ENCODE measurements at regions of chr15 and their contacts with region 1.

Region 1: DNA sequence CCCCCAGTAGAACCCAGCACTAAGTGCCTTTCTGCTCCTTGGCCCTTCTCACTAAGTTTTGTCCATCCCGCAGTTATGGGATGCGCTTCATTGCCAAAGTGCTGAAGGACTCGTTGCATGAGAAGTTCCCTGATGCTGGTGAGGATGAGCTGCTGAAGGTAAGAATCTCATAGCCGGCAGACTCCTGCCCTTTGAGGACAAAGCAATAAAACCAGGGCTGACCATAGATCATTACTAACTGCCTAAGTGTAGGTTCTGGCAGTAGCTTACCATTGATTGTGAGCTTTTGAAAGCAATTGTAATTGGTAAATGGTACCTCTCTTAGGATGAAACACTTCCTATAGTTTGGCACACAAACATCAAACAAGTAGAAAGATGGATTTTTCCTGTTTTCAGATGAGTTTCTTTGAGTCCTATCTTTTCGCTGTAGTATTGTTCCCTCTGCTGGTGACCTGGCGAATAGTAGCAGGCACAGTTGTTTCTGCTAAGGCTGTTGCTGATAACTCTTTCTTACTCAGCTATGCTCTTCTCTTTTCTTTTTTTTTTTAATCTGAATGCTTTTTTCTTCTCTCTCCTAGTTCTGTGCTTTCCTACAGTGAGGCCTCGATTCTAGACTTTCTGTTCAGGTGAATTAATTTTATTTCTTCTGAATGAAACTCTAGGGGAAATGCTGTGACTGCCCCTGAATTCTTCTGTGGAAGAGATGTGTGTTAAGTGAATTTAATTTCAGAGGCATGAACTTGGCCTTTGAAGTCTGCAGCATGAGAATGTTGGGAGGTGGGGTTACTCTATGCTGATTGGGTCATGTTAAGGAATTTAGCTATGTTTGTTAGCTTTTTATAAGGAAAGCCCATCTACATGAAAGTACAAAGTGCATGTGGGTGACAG is 47.4 kb upstream of the CRTC3 start:
- DNase-seq: peak; percentile 71
- ATAC-seq: no peak
- H3K4me3 ChIP-seq: no peak overlapping the region
- H3K27ac ChIP-seq: no peak overlapping the region
- H3K4me1 ChIP-seq: peaks cover 33% of the 10 kb centered on the region
- H3K27me3 ChIP-seq: no peaks in the 10 kb centered on the region
- CTCF ChIP-seq: peak; percentile 91

Region 2: GRCh38 chr15:90320061-90320884 is 162.1 kb before region 1 on chr15:
- CTCF ChIA-PET with region 1: interaction called, 10 read pairs
- POLR2A ChIA-PET with region 1: no interaction called
- intact Hi-C with region 1: loop called (anchors 1 kb)
- DNase-seq: peak; percentile 96
- ATAC-seq: peak; percentile 93
- H3K4me3 ChIP-seq: peak overlapping the region; percentile 28; the same call in 1 of the 2 replicates
- H3K27ac ChIP-seq: no peak overlapping the region
- H3K4me1 ChIP-seq: peaks cover 17% of the 10 kb centered on the region
- H3K27me3 ChIP-seq: no peaks in the 10 kb centered on the region
- CTCF ChIP-seq: peak; percentile 97

Region 3: DNA sequence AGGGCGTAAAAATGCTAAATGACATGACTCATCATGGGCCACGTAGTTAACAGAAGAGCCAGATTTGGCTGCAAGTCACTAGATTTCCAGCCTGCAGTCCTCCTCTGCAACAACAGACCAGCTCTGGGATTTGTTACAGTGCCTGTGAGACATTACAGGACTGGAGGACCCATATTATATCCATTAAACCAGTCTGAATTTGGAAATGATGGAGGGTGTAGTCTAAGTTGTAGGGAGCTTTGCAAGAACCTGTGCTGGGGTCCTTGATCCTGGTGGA is 119.5 kb before region 1 on chr15:
- CTCF ChIA-PET with region 1: interaction called, 12 read pairs
- POLR2A ChIA-PET with region 1: no interaction called
- intact Hi-C with region 1: loop called (anchors 1 kb)
- DNase-seq: peak; percentile 61
- ATAC-seq: peak; percentile 48
- H3K4me3 ChIP-seq: no peak overlapping the region
- H3K27ac ChIP-seq: peak overlapping the region; percentile 74
- H3K4me1 ChIP-seq: peaks cover 40% of the 10 kb centered on the region
- H3K27me3 ChIP-seq: no peaks in the 10 kb centered on the region
- CTCF ChIP-seq: no peak

Region 4: GRCh38 chr15:90400406-90401314 is 81.7 kb before region 1 on chr15:
- CTCF ChIA-PET with region 1: no interaction called
- POLR2A ChIA-PET with region 1: no interaction called
- intact Hi-C with region 1: loop called (anchors 5 kb)
- DNase-seq: peak; percentile 94
- ATAC-seq: peak; percentile 77
- H3K4me3 ChIP-seq: peak overlapping the region; percentile 33
- H3K27ac ChIP-seq: peak overlapping the region; percentile 78
- H3K4me1 ChIP-seq: peaks cover 45% of the 10 kb centered on the region
- H3K27me3 ChIP-seq: no peaks in the 10 kb centered on the region
- CTCF ChIP-seq: no peak